Caco-2 (cell line): ENCODE measurements at regions of chr9 and their contacts with region 1.

Region 1: DNA sequence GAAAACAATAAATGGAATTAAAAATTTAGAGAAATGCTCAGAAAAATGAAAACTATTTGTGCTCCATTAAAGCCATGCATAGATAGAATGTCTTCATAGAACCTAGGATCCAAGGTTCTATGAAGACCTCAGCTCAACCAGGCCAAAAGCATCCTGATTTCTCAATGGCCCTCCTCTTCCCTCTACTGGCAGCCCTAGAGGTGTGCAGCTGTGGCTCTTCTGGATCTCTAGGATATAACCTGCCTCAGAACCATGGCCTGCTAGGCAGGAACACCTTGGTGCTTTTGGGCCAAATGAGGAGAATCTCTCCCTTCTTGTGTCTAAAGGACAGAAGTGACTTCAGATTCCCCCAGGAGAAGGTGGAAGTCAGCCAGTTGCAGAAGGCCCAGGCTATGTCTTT is 15.1 kb downstream of the IFNA1 start:
- DNase-seq: peak in 1 of 2 experiments; percentile 40
- H3K4me3 ChIP-seq: no peak overlapping the region
- H3K4me3 Mint-ChIP-seq: no peak overlapping the region
- H3K27ac Mint-ChIP-seq: no peak overlapping the region
- H3K4me1 ChIP-seq: peaks cover 6% of the 10 kb centered on the region; the same call in 1 of the 2 replicates
- H3K4me1 Mint-ChIP-seq: peaks cover 4% of the 10 kb centered on the region
- H3K27me3 ChIP-seq: no peaks in the 10 kb centered on the region
- H3K27me3 Mint-ChIP-seq: no peaks in the 10 kb centered on the region
- CTCF ChIP-seq: peak; percentile 62 to 73

Region 2: GRCh38 chr9:21210311-21210710 is 245.0 kb before region 1 on chr9:
- CTCF ChIA-PET with region 1: no interaction called
- POLR2A ChIA-PET with region 1: no interaction called
- intact Hi-C with region 1: loop called (anchors 10 kb)
- DNase-seq: no peak
- H3K4me3 ChIP-seq: no peak overlapping the region
- H3K4me3 Mint-ChIP-seq: no peak overlapping the region
- H3K27ac Mint-ChIP-seq: no peak overlapping the region
- H3K4me1 ChIP-seq: no peaks in the 10 kb centered on the region
- H3K4me1 Mint-ChIP-seq: no peaks in the 10 kb centered on the region
- H3K27me3 ChIP-seq: no peaks in the 10 kb centered on the region
- H3K27me3 Mint-ChIP-seq: peaks cover 14% of the 10 kb centered on the region
- CTCF ChIP-seq: no peak

Region 3: GRCh38 chr9:21252721-21253547 is 202.4 kb before region 1 on chr9:
- CTCF ChIA-PET with region 1: interaction called, 5 read pairs
- POLR2A ChIA-PET with region 1: no interaction called
- intact Hi-C with region 1: loop called (anchors 2 kb)
- DNase-seq: peak in 1 of 2 experiments; percentile 4
- H3K4me3 ChIP-seq: no peak overlapping the region
- H3K4me3 Mint-ChIP-seq: no peak overlapping the region
- H3K27ac Mint-ChIP-seq: no peak overlapping the region
- H3K4me1 ChIP-seq: no peaks in the 10 kb centered on the region
- H3K4me1 Mint-ChIP-seq: no peaks in the 10 kb centered on the region
- H3K27me3 ChIP-seq: no peaks in the 10 kb centered on the region
- H3K27me3 Mint-ChIP-seq: peaks cover 7% of the 10 kb centered on the region
- CTCF ChIP-seq: peak; percentile 42 to 43

Region 4: GRCh38 chr9:21317956-21318923 is 137.1 kb before region 1 on chr9:
- CTCF ChIA-PET with region 1: interaction called, 9 read pairs
- POLR2A ChIA-PET with region 1: no interaction called
- intact Hi-C with region 1: loop called (anchors 1 kb)
- DNase-seq: peak in 1 of 2 experiments; percentile 39
- H3K4me3 ChIP-seq: no peak overlapping the region
- H3K4me3 Mint-ChIP-seq: no peak overlapping the region
- H3K27ac Mint-ChIP-seq: no peak overlapping the region
- H3K4me1 ChIP-seq: no peaks in the 10 kb centered on the region
- H3K4me1 Mint-ChIP-seq: peaks cover 5% of the 10 kb centered on the region
- H3K27me3 ChIP-seq: no peaks in the 10 kb centered on the region
- H3K27me3 Mint-ChIP-seq: peaks cover 9% of the 10 kb centered on the region
- CTCF ChIP-seq: peak; percentile 48 to 65

Region 5: DNA sequence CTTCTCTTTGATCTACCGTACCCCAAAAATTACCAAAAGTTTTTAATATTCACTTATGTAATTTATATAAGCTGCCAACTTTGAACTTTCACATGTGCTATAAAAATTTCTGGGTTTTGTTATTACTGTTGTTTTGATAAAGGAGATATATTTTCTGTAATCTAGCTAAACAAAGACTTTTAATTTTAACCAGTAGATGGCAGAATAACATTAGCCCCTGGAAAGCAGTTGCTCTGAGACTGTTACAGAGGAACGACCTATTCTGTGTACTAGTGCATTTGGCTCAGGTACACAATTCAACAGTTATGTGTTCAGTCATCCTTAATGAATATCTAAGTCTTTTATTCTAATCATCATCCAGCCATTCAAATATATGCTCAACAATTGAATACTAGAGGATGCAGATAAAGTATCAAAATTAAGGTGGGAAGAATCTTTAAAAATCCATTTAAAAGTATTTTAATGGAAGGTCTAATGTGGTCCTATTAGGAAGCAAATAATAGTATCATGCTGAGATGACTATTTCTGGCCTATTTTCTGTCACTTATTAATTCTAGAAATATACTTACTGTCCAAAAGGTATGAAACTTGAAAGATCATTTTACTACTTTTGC is 128.7 kb before region 1 on chr9:
- CTCF ChIA-PET with region 1: interaction called, 8 read pairs
- POLR2A ChIA-PET with region 1: no interaction called
- intact Hi-C with region 1: loop called (anchors 1 kb)
- DNase-seq: peak in 1 of 2 experiments; percentile 7
- H3K4me3 ChIP-seq: no peak overlapping the region
- H3K4me3 Mint-ChIP-seq: no peak overlapping the region
- H3K27ac Mint-ChIP-seq: no peak overlapping the region
- H3K4me1 ChIP-seq: no peaks in the 10 kb centered on the region
- H3K4me1 Mint-ChIP-seq: no peaks in the 10 kb centered on the region
- H3K27me3 ChIP-seq: no peaks in the 10 kb centered on the region
- H3K27me3 Mint-ChIP-seq: no peaks in the 10 kb centered on the region
- CTCF ChIP-seq: peak; percentile 27 to 41

Region 6: DNA sequence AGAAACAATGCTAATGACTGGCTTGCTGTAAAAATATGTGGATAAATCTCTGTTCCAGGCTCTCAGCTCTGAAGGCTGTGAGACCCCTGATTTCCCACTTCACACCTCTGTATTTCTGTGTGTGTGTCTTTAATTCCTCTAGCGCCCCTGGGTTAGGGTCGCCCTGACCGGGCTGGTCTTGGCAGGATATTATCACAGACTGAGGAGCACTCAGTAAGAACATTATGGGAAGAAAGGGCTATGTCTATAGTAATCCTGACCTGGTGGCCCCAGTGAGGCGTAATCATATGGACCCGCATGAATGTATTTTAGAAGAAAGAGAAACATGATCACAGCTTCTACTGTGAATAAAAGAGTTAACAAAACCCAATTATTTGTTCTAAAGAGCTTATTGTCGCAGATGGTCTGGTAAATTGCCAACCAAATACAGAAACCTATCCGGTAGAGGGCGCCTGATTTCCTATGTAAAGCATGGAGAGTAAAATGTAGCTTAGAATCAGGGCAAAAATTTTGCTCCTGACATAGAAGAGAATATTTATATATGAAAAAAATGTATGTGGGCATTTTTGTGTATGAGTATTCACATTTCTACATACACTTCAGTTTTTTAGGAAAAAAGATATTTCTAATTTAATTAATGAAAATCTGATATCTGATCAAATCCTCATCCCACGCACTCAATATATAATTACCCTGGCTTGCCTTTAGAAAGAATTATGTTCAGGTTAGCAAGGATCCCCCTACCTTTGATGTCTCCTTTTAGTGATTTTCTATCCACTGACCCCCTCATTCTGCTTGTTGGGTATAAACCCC is 20.9 kb before region 1 on chr9:
- CTCF ChIA-PET with region 1: interaction called, 38 read pairs
- POLR2A ChIA-PET with region 1: no interaction called
- intact Hi-C with region 1: loop called (anchors 1 kb)
- DNase-seq: peak in 1 of 2 experiments; percentile 45
- H3K4me3 ChIP-seq: no peak overlapping the region
- H3K4me3 Mint-ChIP-seq: no peak overlapping the region
- H3K27ac Mint-ChIP-seq: no peak overlapping the region
- H3K4me1 ChIP-seq: no peaks in the 10 kb centered on the region
- H3K4me1 Mint-ChIP-seq: no peaks in the 10 kb centered on the region
- H3K27me3 ChIP-seq: no peaks in the 10 kb centered on the region
- H3K27me3 Mint-ChIP-seq: peaks cover 2% of the 10 kb centered on the region
- CTCF ChIP-seq: peak; percentile 26 to 48